ENCODE measurements at regions of chr11 and their contacts with region 1.

Region 1: GRCh38 chr11:67303132-67303834 is at the start of gene SSH3:
- DNase-seq: peak; percentile 88 to 95
- H3K4me3 ChIP-seq: peak within 1 kb of the TSS; percentile 93
- H3K4me3 Mint-ChIP-seq: peak within 1 kb of the TSS; percentile 80
- H3K27ac Mint-ChIP-seq: peak within 1 kb of the TSS; percentile 86
- H3K4me1 ChIP-seq: peaks cover 23% of the 10 kb centered on the region
- H3K4me1 Mint-ChIP-seq: peaks cover 6% of the 10 kb centered on the region
- H3K27me3 ChIP-seq: no peaks in the 10 kb centered on the region
- H3K27me3 Mint-ChIP-seq: no peaks in the 10 kb centered on the region
- CTCF ChIP-seq: no peak
- total RNA-seq, gene SSH3: 81.2 and 89.6 TPM in 2 replicates

Region 2: GRCh38 chr11:67288452-67289225 is 14.6 kb before region 1 on chr11:
- CTCF ChIA-PET with region 1: interaction called, 11 read pairs
- POLR2A ChIA-PET with region 1: interaction called, 25 read pairs
- intact Hi-C with region 1: loop called (anchors 1 kb)
- DNase-seq: peak; percentile 94 to 95
- H3K4me3 ChIP-seq: peak overlapping the region; percentile 91
- H3K4me3 Mint-ChIP-seq: peak overlapping the region; percentile 99
- H3K27ac Mint-ChIP-seq: peak overlapping the region; percentile 90
- H3K4me1 ChIP-seq: peaks cover 20% of the 10 kb centered on the region
- H3K4me1 Mint-ChIP-seq: peaks cover 29% of the 10 kb centered on the region
- H3K27me3 ChIP-seq: no peaks in the 10 kb centered on the region
- H3K27me3 Mint-ChIP-seq: no peaks in the 10 kb centered on the region
- CTCF ChIP-seq: peak; percentile 51 to 56

Measured in Caco-2 (cell line).